ENCODE measurements at regions of chr11 and their contacts with region 1.

Region 1: GRCh38 chr11:45607995-45608394 is 57.4 kb downstream of the CHST1 start:
- DNase-seq: no peak
- ATAC-seq: no peak

Region 2: GRCh38 chr11:45209891-45210699 is 397.9 kb before region 1 on chr11:
- intact Hi-C with region 1: no loop called
- DNase-seq: peak; percentile 77
- ATAC-seq: peak; percentile 95

Region 3: DNA sequence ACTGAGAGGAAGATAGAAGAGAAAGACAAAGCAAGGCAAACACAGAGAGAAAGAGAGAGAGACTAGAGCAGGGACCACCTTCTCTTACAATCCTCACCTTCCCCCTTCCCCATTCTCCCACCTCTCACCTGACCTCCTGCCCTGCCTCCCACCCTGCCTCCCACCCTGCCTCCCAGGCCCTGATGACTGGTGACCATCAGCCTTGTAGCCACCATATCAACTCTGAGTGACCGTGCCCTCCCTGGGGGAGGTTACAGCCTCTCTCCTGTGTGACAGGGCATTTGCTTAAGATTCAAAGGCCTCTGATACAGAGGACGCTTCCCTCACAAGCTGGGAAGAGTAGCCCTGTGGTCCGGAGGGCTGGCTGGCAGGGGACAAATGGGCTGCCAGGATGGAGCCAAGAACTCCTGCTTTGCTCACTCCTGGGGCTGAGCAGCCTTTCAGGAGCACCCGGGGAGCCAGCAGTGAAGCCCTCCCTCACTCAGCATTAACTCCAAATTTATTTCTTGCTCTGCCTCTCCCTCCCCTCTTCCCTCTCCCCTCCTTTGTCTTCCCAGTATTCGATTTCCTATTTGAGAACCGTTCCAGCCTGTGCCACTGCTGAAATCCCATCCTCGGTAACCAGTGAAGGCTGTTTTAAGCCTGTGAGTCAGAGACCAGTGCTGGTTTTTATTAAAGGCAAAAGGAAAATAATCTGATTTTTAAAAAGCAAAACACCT is 196.6 kb before region 1 on chr11:
- intact Hi-C with region 1: no loop called
- DNase-seq: no peak
- ATAC-seq: no peak

Region 4: DNA sequence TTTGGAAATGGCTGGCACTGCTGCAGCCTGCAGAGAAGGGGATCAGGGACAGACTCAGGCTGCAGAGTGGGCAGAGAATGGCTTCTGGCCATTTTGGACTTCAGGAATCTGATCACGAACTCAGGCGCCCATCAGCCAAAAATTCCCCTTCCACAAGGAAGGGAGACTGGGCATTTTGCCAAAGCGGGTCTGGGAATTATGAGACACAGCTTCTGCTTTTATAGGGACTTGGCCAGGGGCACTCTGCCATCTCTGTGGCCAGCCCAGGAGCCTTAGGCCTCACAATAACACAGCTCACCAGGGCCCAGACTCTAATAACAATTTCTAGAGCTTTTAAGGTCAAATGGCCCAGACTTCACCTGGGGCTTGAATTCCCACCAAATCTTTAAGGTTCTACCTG is 17.3 kb before region 1 on chr11:
- intact Hi-C with region 1: loop called (anchors 1 kb)
- DNase-seq: no peak
- ATAC-seq: no peak

Measured in sciatic nerve (tissue), 2 donors.